Activated T-helper 1 cell treated with anti-CD3 and anti-CD28 coated beads, Interleukin-12 subunit alpha, Interleukin-12 subunit beta, Interleukin-2, Interleukin-4 antibody, amounts not matched to agents 30 ng/mL and 10 ng/mL and 1 ng/mL, durations not matched to agents 14 hours and 24 hours and 36 hours (primary cell): ENCODE measurements at regions of chr4 and their contacts with region 1.

Region 1: DNA sequence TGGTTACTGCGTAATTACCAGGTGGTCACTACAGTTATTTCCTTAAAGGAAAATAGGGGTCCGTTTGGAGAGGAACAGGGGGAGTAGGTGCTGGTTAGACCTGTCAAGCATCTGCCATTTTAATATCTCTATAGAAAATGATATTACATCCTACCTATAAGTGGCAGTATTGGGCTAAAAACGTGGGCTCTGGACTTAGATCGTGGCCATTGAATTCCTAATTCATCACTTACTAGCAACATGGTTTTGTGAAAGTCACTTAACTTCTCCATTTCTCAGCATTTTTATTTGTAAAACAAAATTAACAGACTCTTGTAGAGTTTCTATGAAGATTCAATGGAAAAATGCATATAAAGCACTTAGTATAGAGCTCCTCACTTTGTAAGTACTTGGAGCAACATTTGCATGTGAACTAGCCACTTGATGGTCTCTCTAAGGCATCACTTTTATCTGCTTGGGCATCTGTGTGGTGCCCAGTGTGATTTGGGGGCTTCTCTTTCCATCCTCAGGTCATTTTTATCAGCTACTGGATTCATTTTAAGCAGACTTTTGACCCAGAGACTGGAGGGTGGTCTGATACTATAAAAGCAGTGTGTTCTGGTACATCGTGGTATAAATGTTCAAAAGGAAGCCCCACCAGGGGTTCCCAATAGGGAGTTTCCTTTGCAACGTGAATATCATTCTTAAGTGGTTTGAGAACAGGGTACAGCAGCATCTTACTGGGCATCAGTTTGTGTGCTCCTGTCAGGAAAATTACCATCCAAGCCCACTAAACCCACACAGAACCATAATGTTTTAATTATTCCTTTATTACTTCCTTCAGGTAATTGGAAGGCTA is 42.7 kb upstream of the RASSF6 start:
- DNase-seq: no peak
- H3K4me3 Mint-ChIP-seq: no peak overlapping the region
- H3K27ac Mint-ChIP-seq: no peak overlapping the region
- H3K4me1 Mint-ChIP-seq: no peaks in the 10 kb centered on the region
- H3K27me3 Mint-ChIP-seq: peaks cover 4% of the 10 kb centered on the region

Region 2: DNA sequence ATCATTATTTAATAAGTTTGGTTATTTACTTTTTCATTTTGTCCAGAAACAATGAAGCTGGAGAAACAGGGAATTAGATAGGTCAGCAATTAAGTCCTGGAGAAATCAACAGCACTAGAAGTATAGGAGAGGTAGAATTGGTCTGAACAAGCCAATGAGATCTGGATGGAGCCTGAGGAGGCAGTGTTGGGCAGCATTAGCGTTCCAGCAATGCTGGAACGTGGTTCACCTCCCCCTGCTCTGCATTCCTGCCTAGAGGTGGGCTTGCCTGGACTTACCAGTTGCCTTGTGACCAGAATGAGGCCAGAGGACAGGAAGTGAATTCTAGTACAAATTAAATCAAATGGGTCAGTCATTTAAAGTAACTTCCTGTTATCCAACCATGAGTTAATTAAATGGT is 47.3 kb before region 1 on chr4:
- intact Hi-C with region 1: no loop called
- DNase-seq: no peak
- H3K4me3 Mint-ChIP-seq: no peak overlapping the region
- H3K27ac Mint-ChIP-seq: no peak overlapping the region
- H3K4me1 Mint-ChIP-seq: peaks cover 10% of the 10 kb centered on the region
- H3K27me3 Mint-ChIP-seq: peaks cover 22% of the 10 kb centered on the region

Region 3: DNA sequence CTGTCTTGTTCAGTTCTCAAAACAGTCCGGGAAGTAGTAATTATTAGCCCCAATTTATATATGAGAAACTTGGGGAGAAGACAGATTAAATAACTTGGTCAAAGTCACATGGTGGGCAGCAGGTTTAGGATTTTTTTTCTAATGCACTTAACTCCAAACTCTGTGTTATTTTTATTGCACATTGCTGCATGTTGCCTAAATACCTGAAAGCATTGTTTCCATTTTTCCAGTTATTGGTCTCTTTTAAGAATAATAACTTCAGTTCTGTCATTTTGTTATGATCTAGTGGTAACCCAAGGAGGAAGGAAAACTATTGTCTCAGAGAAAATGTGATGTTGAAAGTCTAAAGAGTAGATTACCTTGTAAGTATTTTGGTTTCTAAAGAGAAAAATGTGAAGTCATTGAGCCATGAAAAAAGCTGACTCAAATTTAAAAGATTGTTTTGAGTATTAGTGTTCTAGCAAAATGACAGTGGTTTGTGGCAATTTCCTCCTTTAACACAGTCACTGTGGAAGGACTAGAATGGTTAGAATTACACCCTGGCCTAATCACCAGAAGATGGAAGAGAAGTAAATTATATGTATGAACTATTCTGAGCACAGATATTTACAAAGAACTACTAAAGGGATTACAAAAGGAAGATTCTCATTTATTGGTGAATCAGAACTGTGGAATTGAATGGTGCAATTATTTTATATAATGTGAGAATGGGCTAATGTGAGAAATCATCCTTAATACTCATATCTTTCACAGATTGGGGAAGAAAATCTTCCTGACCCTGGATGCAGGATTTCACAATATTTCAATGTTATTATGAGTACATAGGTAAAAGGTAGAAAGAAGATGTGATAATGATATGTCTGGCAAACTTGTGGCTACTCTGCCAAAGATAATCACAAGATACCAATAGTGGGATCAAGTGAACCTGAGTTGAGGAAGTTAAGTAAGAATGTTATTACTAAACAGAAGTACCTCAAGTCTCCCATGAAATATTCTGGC is 55.7 kb after region 1 on chr4:
- intact Hi-C with region 1: loop called (anchors 2 kb)
- DNase-seq: no peak
- H3K4me3 Mint-ChIP-seq: no peak overlapping the region
- H3K27ac Mint-ChIP-seq: no peak overlapping the region
- H3K4me1 Mint-ChIP-seq: peaks cover 16% of the 10 kb centered on the region
- H3K27me3 Mint-ChIP-seq: peaks cover 1% of the 10 kb centered on the region

Region 4: GRCh38 chr4:73922766-73923630 is 260.1 kb after region 1 on chr4:
- intact Hi-C with region 1: loop called (anchors 5 kb)
- DNase-seq: no peak
- H3K4me3 Mint-ChIP-seq: no peak overlapping the region
- H3K27ac Mint-ChIP-seq: no peak overlapping the region
- H3K4me1 Mint-ChIP-seq: no peaks in the 10 kb centered on the region
- H3K27me3 Mint-ChIP-seq: no peaks in the 10 kb centered on the region

Region 5: DNA sequence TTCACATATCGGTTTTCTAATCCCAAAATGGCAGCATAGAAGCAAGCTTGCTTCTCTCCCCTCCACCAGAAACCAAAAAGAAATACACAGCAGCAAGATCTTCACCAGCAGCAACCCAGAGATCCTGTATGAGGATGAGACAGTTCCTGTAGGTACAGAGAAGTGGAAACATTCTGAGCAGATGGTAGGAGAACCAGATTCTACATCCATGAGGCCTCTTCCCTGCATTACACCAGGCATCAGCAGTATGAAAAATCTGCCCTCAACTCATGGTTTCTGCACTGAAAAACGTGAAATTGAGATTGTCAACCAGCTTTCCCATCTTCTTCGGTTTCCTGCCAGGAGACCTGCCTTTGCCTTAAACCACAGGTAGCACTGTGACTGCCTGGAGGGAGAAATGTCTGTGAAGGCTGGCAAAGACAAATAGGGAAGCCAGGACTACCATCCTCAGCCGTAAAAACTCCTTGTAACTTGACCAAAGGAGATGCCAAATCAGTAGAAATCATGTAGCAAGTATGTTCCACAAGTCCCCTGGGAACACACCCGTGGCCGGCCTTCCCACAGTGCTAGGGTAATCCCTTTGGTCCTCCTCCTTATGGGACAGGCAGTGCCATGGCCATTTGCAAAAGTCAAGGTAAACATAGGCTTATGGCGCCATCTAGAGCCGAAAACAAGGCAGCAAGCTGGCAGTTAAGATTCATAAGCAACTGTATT is 471.0 kb after region 1 on chr4:
- intact Hi-C with region 1: loop called (anchors 2 kb)
- DNase-seq: peak; percentile 28
- H3K4me3 Mint-ChIP-seq: no peak overlapping the region
- H3K27ac Mint-ChIP-seq: no peak overlapping the region
- H3K4me1 Mint-ChIP-seq: no peaks in the 10 kb centered on the region
- H3K27me3 Mint-ChIP-seq: peaks cover 12% of the 10 kb centered on the region

Region 6: GRCh38 chr4:74311696-74312313 is 648.9 kb after region 1 on chr4:
- intact Hi-C with region 1: loop called (anchors 2 kb)
- DNase-seq: no peak
- H3K4me3 Mint-ChIP-seq: no peak overlapping the region
- H3K27ac Mint-ChIP-seq: no peak overlapping the region
- H3K4me1 Mint-ChIP-seq: peaks cover 6% of the 10 kb centered on the region
- H3K27me3 Mint-ChIP-seq: peaks cover 5% of the 10 kb centered on the region